ENCODE measurements at regions of chr11 and their contacts with region 1.

Region 1: DNA sequence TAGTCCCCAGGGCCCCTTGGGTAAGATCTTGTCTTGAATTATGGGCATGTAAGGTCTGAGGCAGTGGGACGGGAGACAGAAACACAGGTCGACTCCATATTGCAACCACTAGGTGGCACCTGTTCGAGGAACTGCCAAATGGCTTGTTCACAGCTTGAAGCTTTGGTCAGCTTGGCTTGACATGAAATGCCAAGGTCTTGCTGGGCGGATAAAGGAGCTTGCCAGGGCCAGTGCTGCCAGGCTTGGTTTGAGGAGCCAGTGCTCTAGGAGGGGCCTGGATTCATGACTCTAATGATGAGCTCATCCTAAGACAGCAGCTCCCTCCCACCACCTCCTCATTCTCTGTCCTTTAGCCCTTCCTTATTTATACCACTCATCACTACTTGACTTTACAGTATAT is 11.9 kb upstream of the NRIP3 start:
- DNase-seq: peak; percentile 70
- ATAC-seq: peak; percentile 96
- H3K4me3 Mint-ChIP-seq: no peak overlapping the region
- H3K27ac Mint-ChIP-seq: no peak overlapping the region
- H3K4me1 Mint-ChIP-seq: peaks cover 4% of the 10 kb centered on the region
- H3K27me3 Mint-ChIP-seq: no peaks in the 10 kb centered on the region; the same call in 1 of the 2 replicates
- CTCF ChIP-seq: peak; percentile 80

Region 2: DNA sequence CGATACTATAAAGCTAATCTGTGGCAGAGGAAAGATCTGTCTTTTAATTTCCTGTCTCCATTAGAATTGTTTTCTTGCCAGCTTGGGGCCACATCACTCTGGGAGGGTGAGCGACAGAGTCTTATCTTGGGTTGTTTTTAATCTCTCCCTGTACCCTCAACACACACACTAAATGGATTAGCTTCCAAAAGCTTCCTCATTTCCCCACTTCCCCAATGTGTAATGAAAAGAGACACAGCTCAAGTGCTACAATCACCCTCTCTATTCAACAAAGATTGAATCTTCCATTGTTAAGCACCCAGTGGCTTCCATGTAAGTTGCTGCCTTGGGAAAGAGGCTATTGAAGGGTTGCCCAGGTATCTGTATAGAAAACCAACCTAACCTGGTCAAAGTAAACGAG is 66.8 kb before region 1 on chr11:
- CTCF ChIA-PET with region 1: no interaction called
- POLR2A ChIA-PET with region 1: no interaction called
- DNase-seq: no peak
- ATAC-seq: peak; percentile 46; the same call in 1 of the 2 replicates
- H3K4me3 Mint-ChIP-seq: no peak overlapping the region
- H3K27ac Mint-ChIP-seq: no peak overlapping the region
- H3K4me1 Mint-ChIP-seq: peaks cover 7% of the 10 kb centered on the region; the same call in 1 of the 2 replicates
- H3K27me3 Mint-ChIP-seq: no peaks in the 10 kb centered on the region
- CTCF ChIP-seq: no peak

Region 3: DNA sequence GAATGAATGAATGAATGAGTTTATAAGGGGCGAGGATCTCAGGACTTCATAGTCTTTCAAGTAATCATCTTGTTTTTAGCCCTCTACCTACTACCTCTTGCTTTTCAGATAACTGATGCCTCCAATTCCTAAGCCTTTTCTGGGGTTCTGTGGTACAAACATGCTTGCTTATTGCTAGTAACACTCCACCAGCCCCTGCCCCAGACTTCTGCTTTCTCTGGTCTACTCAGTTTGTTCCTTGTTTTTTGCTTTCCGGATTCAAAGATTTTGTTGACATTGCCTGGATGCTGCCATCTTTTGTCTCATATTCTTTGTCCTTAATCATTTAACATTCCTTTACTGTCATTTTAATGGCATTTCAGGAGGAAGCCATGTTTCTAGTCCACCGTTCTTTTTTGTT is 42.6 kb before region 1 on chr11:
- CTCF ChIA-PET with region 1: no interaction called
- POLR2A ChIA-PET with region 1: no interaction called
- DNase-seq: no peak
- ATAC-seq: no peak
- H3K4me3 Mint-ChIP-seq: no peak overlapping the region
- H3K27ac Mint-ChIP-seq: no peak overlapping the region
- H3K4me1 Mint-ChIP-seq: no peaks in the 10 kb centered on the region
- H3K27me3 Mint-ChIP-seq: no peaks in the 10 kb centered on the region
- CTCF ChIP-seq: no peak

Region 4: DNA sequence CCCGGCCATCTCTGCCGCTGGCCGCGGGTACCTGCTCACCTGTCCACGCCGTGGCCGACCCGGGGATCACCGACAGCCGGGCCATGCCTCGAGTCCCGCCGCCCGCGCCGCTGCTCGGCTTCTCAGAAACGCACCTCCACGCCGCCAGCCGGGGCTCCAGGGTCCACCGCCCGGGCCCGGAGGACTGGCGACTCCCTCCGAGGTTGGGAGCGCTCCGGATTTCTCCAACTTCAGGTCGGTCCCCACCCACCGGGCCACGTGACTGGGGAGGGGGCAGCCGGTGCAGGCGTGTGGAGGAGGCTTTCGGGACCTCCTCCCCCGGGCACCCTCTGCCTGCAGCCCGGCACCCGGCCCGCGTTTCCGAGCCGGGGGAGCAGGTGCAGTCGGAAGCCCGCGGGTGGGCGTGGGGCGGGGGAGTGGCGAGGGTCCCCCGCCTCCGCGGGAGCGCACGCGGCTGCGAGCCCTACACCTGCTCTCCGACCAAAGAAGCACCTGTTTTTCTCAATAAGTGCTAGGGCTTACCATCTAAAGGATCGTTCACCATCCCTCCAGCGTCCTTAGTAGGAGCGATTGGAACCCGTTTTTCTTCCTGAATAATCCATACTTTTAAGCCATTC is 11.3 kb before region 1 on chr11:
- CTCF ChIA-PET with region 1: interaction called, 11 read pairs
- POLR2A ChIA-PET with region 1: no interaction called
- DNase-seq: peak; percentile 68
- ATAC-seq: peak; percentile 59
- H3K4me3 Mint-ChIP-seq: peak overlapping the region; percentile 64
- H3K27ac Mint-ChIP-seq: no peak overlapping the region
- H3K4me1 Mint-ChIP-seq: peaks cover 18% of the 10 kb centered on the region
- H3K27me3 Mint-ChIP-seq: peaks cover 85% of the 10 kb centered on the region
- CTCF ChIP-seq: no peak

Region 5: DNA sequence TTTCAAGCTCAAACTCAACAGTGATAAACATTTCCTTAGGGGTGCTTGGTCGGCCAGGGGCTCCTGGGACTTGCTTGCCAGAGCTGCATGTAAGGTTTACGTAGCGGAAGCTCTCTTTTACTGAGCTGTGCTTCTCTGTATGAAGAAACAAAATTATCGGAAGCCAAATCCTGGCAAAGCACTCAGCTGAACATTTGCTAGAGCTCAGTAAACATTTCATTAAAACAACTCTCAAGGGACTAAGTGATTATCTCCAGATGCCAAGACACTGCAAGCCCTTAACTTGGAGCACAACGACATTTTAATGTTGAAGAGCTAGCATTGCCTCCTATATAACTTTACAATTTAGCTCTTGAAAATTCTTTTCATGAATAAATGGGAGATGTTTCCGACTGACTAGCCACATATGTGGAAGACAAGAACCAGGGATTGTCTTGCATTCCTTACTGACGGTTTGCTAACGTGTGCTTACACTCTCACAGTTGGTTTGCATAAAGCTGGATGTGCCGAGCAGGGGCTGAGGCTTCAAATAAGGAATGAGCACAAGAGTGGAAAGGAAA is 32.4 kb after region 1 on chr11:
- CTCF ChIA-PET with region 1: interaction called, 15 read pairs
- POLR2A ChIA-PET with region 1: no interaction called
- DNase-seq: no peak
- ATAC-seq: no peak; the same call in 1 of the 2 replicates
- H3K4me3 Mint-ChIP-seq: no peak overlapping the region
- H3K27ac Mint-ChIP-seq: no peak overlapping the region
- H3K4me1 Mint-ChIP-seq: peaks cover 33% of the 10 kb centered on the region
- H3K27me3 Mint-ChIP-seq: no peaks in the 10 kb centered on the region
- CTCF ChIP-seq: no peak

Region 6: DNA sequence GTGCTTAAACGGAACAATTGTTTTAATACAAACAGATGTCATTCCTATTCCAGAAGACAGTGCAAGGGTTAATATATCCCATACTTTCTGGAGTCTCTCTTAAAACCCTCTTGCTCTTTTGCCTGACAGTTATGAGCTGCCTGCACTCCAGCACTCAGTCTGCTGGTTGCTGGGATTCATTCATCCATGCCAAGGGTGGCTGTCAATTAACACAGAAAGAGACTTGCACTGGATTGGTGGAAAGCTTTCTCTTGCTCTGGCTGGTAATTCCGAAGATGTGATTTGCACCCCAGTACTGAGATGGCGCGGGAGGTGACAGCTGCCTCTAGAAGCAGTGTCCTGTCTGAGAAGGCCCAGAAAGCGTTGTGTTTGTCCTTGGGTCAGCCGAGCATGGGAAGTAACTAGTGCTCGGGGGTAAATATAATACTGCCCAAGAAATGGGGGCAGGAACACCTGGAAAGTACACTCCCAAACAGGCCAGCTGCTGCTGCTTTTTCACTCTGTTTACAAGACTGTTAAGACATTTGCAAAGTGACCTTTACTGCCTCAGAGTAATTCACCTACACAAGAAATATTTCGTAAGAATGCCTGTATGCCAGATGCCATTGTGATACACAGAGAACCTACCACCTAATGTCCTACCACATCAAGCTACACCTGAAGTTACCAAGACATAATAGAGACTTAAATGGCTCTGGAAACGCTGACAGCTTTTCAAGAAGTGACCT is 55.2 kb after region 1 on chr11:
- CTCF ChIA-PET with region 1: interaction called, 11 read pairs
- POLR2A ChIA-PET with region 1: no interaction called
- DNase-seq: no peak
- ATAC-seq: no peak
- H3K4me3 Mint-ChIP-seq: no peak overlapping the region
- H3K27ac Mint-ChIP-seq: no peak overlapping the region
- H3K4me1 Mint-ChIP-seq: peaks cover 22% of the 10 kb centered on the region
- H3K27me3 Mint-ChIP-seq: no peaks in the 10 kb centered on the region; the same call in 1 of the 2 replicates
- CTCF ChIP-seq: no peak

Region 7: DNA sequence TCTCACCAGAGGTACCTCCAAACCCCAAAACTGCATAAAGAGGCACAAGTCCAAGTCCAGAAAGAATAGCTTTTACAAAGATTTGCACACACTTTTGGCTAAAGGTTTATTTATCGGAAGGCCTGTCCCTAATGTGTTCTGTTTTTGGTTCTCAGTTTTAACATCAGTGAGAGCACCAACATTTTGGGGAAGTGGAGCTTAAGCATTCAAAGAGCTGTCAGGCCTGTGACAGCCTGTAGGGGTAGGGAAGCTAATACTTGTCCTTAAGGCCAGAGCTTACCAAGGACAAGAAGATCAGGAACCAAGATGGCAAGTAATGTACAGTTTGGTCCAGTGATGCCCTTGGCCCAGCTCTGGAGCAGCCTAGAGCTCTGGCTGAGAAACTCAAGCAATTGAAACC is 114.6 kb after region 1 on chr11:
- CTCF ChIA-PET with region 1: interaction called, 12 read pairs
- POLR2A ChIA-PET with region 1: no interaction called
- DNase-seq: no peak
- ATAC-seq: no peak
- H3K4me3 Mint-ChIP-seq: no peak overlapping the region
- H3K27ac Mint-ChIP-seq: no peak overlapping the region
- H3K4me1 Mint-ChIP-seq: peaks cover 15% of the 10 kb centered on the region
- H3K27me3 Mint-ChIP-seq: no peaks in the 10 kb centered on the region
- CTCF ChIP-seq: no peak